ENCODE measurements at regions of chr15 and their contacts with region 1.

Region 1: DNA sequence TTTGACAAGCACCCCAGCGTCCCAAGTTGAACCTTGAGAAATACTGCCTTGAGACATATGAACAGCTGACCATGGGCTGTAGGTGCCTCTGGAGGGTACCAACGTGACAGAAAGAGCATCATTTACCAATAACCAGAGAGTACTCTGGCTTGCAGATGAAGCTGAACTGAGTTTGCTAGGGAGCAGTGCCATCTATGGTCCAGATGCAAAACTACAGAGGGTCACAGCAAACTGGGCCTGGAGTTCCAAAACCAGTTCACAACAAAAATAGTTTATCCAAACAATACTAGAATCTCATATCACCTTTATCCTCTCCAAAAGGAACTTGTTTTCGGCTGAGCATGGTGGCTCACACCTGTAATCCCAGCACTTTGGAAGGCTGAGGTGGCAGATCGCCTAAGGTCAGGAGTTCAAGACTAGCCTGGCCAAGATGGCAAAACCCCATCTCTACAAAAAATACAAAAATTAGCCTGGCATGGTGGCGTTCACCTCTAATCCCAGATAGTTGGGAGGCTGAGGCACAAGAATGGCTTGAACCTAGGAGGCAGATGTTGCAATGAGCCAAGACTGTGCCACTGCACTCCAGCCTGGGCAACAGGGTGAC is 69.3 kb downstream of the CHAC1 start:
- DNase-seq: no peak
- H3K4me3 ChIP-seq: no peak overlapping the region
- H3K27ac ChIP-seq: no peak overlapping the region
- H3K4me1 ChIP-seq: peaks cover 3 to 34% (median 19%) of the 10 kb centered on the region in 6 donors
- H3K27me3 ChIP-seq: no peaks in the 10 kb centered on the region
- CTCF ChIP-seq: peak in 10 of 11 experiments; percentile 44 to 74 (median 67)
- POLR2A ChIP-seq: no peak

Region 2: DNA sequence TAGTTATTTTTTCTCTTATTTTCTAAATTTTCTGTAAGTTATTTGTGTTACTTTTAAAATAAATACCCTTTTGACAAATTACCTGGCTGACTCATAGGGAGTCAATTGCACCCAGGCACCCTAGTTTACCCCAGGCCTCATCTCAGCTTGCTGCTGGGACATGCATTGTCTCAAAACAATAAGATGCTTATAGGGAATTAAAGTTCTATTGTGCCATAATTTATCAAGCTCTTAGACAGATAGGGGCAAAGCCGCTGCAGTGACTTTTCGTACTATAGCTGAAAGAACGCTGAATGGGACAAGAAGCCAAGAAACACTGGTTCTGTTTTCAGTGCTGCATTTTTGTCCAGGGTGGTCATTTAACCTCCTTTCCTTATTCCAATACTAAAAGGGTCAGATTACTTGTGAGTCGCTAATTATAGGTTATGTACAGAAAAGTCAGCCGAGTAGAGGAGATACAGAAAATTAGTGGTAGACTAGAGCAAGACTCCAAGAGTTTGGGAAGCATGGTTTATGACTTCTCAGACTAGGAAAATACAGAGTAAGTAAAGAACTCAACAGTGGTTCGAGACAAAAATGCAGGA is 157.7 kb after region 1 on chr15:
- intact Hi-C with region 1: loop called (anchors 5 kb)
- DNase-seq: no peak
- H3K4me3 ChIP-seq: no peak overlapping the region
- H3K27ac ChIP-seq: no peak overlapping the region
- H3K4me1 ChIP-seq: peaks cover 0 to 9% (median 0%) of the 10 kb centered on the region in 6 donors
- H3K27me3 ChIP-seq: no peaks in the 10 kb centered on the region
- CTCF ChIP-seq: no peak
- POLR2A ChIP-seq: no peak

Measured in spleen (tissue), 13 donors.